ENCODE measurements at regions of chr1 and their contacts with region 1.

Region 1: DNA sequence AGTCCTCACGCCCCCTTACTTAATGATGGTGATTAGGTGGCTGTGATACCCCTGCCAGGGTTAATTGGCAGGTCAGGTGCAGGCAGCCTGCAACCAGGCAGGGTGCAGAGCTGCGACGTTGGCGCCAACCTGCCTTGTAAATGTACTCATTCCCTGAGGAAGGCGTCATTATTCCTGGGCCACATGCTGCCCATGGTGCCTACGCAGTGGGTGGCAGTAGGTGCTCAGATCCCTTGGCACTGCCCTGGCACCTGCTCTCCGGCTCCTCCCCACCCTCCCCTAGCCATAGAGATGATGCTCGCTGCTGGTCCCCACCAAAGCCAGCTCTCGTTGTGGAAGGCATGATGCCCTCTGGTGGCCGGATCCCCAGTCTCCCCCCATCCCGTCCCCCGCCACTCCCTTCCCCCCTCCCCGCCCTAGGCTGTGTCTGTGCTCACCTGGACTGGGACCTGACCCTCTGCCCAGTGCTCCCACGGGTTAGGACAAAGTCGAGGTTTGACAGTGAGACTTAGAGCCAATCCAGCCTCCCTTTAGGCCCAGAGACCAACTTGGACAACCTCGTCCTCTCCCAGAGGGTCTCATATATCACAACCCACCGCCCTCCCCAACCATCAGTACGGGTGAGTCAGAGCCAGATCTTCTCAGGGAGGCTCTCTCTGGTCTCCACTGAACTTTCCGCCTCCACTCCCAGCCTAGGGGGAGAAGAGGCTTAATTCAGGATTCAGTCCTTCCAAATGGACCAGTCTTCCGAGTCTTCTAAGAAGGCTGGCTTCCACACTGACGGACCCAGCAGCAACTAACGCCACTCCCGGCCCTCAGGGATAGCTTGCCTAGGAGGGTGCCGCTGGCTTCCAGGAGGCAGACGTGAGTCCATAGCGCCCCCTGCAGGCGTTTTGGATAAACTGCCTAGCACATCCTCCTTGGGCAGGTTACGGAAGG is 5.7 kb downstream of the KRTCAP2 start:
- DNase-seq: peak; percentile 93
- ATAC-seq: peak; percentile 82

Region 2: DNA sequence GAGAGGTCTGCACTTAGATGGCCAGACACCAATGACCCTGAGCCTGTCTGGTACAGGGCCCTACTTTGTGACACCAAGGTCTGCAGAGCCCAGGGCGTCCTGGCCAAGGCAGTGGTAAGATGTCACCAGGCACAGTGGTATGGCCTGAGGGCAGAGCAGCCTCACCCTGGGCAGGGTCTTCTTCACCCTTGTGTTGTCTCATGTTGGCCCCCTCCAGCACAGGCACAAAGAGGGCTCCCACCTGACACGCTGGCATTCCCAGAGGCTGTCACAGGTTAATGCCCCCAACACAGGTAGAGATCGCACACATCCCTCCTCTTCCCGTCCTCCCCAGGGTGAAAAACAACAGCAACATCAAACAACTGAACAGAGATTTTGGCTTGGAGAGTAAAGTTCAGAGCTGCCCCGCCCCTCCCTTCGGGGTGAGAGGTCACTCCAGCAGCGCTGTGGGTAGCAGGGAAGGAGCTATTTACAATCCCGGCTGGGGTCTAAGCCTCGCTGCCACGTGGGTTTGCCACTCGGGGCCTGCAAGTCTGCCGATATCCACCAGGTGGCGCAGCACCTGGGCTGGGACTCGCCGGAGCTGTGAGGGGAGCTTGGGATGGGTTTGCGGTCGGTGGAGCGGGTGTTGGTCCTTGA is 76.2 kb before region 1 on chr1:
- intact Hi-C with region 1: loop called (anchors 1 kb)
- DNase-seq: peak; percentile 91
- ATAC-seq: peak; percentile 56

Region 3: DNA sequence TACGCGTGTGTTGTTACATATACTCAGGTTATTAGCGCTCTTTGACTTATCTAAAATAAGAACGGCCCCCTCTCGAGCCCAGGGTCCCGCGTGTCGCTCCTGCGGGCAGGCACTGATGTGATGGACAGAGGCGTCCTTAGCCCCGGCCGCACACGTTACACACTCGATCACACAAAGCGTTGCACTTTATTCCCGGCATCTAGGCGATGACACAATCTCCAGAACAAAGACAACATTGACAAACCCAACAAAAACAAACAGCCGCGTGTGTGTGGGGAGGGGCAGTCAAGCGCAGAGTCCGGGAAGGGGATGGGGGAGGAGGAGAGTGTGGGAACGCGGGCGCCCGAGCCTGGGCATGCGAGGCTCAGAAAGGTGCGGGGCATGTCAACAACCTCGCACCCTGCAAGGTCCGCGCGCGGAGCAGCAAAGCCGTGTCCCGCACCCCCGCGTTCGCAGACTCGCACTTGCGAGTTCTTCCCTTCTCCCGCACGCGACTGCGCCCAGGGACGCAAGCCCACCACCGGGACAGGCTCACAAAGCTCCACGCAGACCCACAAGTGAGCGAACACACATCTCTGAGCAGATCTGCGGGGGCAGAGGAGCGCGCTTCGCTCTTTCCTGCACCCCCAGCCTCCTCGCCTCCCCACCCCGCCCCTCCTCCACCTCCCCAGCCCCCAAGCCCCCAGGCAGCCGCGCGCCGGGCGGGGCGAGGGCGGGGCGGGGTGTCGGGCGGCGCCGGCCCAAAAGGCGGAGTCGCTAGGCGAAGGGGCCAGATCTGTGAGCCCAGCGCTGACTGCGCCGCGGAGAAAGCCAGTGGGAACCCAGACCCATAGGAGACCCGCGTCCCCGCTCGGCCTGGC is 40.1 kb before region 1 on chr1 and contains the start of gene EFNA1:
- intact Hi-C with region 1: loop called (anchors 2 kb)
- DNase-seq: peak; percentile 82
- ATAC-seq: peak; percentile 66
- total RNA-seq, gene EFNA1: 43.9 TPM

Region 4: GRCh38 chr1:155135415-155136028 is 31.9 kb before region 1 on chr1 and contains the start of gene SLC50A1:
- intact Hi-C with region 1: loop called (anchors 2 kb)
- DNase-seq: peak; percentile 98
- ATAC-seq: peak; percentile 96
- total RNA-seq, gene SLC50A1: 9.3 TPM

Measured in Right ventricle myocardium inferior (tissue), 1 donor.